Heart right ventricle (tissue), 16 donors: ENCODE measurements at regions of chr2 and their contacts with region 1.

Region 1: GRCh38 chr2:44560352-44560751 is 198.6 kb downstream of the CAMKMT start:
- DNase-seq: peak in 1 of 2 donors; percentile 6
- ATAC-seq: no peak
- H3K4me3 ChIP-seq: no peak overlapping the region
- H3K27ac ChIP-seq: no peak overlapping the region
- H3K4me1 ChIP-seq: no peaks in the 10 kb centered on the region
- H3K27me3 ChIP-seq: no peaks in the 10 kb centered on the region
- CTCF ChIP-seq: peak in 7 of 9 donors; percentile 25 to 50 (median 40)

Region 2: DNA sequence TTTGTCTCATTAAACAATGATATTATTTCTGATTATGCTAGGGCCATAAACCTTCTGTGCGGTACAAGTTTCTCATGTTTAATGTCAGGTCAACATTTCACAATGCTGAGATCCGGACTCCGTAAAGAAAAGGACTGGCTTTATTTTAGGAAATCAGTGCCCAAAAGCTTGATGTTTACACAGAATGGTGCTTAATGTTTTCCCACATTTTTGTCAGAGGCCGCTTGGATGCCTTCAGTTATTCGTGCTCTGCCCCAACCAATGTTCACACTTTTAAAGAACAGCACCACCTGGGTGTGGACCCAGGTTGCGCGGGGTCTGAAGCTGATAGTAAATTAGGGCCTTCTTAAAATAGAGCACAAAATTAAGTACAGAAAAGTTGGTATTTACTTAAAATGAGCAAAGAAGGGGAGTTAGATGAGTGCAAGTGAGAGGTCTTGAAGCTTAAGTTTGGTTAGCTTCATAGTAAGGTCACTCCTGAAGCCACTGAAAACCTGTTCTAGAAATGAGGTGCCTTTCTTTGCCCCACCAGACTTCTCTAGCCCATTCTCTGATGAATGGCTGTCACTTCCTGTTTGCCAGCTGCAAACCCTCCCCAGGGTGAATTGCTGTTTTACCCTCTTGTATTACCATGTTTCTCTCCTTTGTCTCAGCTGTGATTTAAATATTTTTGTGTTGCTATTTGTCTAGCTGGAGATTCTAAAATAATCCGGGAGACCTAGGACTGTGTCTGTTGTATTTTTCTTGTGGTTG is 264.6 kb before region 1 on chr2:
- intact Hi-C with region 1: no loop called
- DNase-seq: no peak
- ATAC-seq: no peak
- H3K4me3 ChIP-seq: no peak overlapping the region
- H3K27ac ChIP-seq: no peak overlapping the region
- H3K4me1 ChIP-seq: peaks cover 0 to 9% (median 4%) of the 10 kb centered on the region in 9 donors
- H3K27me3 ChIP-seq: peaks cover 0 to 6% (median 0%) of the 10 kb centered on the region in 7 donors
- CTCF ChIP-seq: peak in 1 of 9 donors; percentile 12

Region 3: DNA sequence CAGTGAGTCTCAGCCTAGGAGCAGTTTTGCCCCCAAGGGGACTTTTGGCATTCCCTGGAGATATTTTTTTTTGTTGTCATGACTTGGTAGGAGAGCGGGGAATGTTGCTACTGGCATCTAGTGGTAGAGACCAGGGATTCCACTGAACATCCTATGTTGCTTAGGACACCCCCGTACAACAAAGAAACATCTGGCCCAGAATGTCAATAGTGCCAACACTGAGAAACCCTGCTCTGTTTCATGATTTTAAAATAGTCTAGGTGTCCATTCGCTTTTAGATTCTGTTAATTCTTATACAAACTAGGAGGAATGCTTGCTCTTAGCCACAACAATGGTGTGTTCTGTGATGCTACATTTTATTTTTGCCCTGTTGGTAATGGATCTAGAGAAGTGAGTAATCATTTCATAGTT is 155.3 kb after region 1 on chr2:
- intact Hi-C with region 1: loop called in 1 of 10 experiments (anchors 10 kb)
- DNase-seq: peak in 1 of 2 donors; percentile 17
- ATAC-seq: peak in 5 of 8 donors; percentile 37 to 64 (median 39)
- H3K4me3 ChIP-seq: no peak overlapping the region
- H3K27ac ChIP-seq: no peak overlapping the region
- H3K4me1 ChIP-seq: peaks cover 0 to 11% (median 0%) of the 10 kb centered on the region in 9 donors
- H3K27me3 ChIP-seq: no peaks in the 10 kb centered on the region
- CTCF ChIP-seq: peak in 7 of 9 donors; percentile 42 to 67 (median 52)

Region 4: GRCh38 chr2:44941551-44942234 is 381.3 kb after region 1 on chr2 and contains the start of gene SIX3:
- intact Hi-C with region 1: loop called in 1 of 10 experiments (anchors 10 kb)
- DNase-seq: no peak
- ATAC-seq: peak in 2 of 8 donors; percentile 31 to 41
- H3K4me3 ChIP-seq: peak within 1 kb of the TSS in 8 of 10 donors; percentile 19 to 48 (median 31)
- H3K27ac ChIP-seq: no peak within 1 kb of the TSS
- H3K4me1 ChIP-seq: peaks cover 3 to 63% (median 49%) of the 10 kb centered on the region in 9 donors
- H3K27me3 ChIP-seq: peaks cover 76 to 100% (median 99%) of the 10 kb centered on the region in 7 donors
- CTCF ChIP-seq: no peak
- total RNA-seq, gene SIX3: not detected